Tibial artery (tissue), 4 donors: ENCODE measurements at regions of chr15 and their contacts with region 1.

Region 1: DNA sequence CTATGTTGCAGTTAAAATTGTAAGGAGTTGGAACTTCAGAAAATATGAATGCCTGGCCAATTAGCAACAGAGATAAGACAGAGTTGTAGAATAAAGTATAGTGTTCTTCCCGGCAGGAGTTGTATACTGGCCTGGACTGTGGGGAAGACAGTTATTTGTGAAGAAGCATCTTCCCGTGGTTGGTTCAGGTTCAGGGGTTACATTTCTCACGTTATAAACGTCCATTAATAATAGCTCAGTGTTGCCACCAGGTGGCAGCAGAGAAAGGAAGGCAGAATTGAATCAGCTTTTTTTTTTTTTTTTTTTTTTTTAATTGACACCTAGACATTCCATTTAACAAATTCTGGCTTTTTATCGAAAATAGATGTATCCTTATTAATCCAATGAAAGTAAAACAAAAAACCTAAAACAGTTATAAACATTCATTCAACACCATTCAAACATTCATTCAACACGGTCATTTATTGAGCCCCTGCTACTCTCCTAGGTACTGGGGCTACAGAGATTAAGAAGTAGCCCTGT is 66.4 kb upstream of the NR2E3 start:
- DNase-seq: peak in 1 of 2 donors; percentile 62
- H3K4me3 ChIP-seq: no peak overlapping the region
- H3K27ac ChIP-seq: no peak overlapping the region
- H3K4me1 ChIP-seq: peaks cover 0 to 3% (median 0%) of the 10 kb centered on the region in 4 donors
- H3K27me3 ChIP-seq: no peaks in the 10 kb centered on the region
- CTCF ChIP-seq: peak; percentile 57 to 63

Region 2: DNA sequence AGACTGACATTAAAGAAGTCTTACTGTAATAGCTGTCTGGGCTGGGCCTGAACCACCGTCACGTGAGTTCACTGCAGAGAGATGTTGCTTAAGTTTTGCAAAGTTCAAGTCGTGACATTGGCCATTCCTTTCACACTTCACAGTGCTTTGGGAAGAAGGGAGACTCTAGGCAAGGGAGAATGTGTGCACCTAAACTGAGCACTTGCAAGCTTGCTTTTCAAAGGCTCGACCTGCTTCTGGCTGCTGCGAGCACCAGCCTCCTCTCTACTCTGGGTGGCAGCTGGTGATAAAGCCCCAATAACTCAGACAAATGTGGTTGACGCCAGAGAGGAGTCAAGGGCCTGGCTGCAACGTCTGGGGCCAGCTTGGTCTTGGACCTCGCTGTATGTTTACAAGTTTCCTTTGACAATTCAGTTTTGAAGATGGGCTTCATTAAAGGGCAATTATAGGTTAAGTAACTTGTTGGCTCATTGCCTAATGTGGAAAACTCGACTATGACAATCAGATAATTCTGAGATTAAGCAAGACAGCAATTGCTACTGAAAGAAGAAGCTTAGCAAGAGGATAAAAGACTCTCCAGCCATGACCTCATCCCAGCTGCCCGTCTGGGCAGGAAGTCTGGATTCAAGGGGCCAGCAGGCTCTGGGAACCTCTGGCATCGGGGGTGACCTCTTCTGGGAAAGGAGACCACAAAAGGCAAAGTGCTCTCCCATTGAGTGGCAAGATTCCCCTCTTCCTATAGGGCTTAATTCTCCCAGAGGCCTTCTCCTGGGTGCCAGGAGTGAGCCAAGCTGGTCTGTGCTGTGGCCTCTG is 1404.0 kb before region 1 on chr15:
- intact Hi-C with region 1: no loop called
- DNase-seq: no peak
- H3K4me3 ChIP-seq: no peak overlapping the region
- H3K27ac ChIP-seq: no peak overlapping the region
- H3K4me1 ChIP-seq: no peaks in the 10 kb centered on the region
- H3K27me3 ChIP-seq: no peaks in the 10 kb centered on the region
- CTCF ChIP-seq: no peak

Region 3: GRCh38 chr15:71800835-71801745 is 57.2 kb after region 1 on chr15:
- intact Hi-C with region 1: loop called (anchors 5 kb)
- DNase-seq: no peak
- H3K4me3 ChIP-seq: no peak overlapping the region
- H3K27ac ChIP-seq: no peak overlapping the region
- H3K4me1 ChIP-seq: no peaks in the 10 kb centered on the region
- H3K27me3 ChIP-seq: no peaks in the 10 kb centered on the region
- CTCF ChIP-seq: peak; percentile 90 to 97

Region 4: DNA sequence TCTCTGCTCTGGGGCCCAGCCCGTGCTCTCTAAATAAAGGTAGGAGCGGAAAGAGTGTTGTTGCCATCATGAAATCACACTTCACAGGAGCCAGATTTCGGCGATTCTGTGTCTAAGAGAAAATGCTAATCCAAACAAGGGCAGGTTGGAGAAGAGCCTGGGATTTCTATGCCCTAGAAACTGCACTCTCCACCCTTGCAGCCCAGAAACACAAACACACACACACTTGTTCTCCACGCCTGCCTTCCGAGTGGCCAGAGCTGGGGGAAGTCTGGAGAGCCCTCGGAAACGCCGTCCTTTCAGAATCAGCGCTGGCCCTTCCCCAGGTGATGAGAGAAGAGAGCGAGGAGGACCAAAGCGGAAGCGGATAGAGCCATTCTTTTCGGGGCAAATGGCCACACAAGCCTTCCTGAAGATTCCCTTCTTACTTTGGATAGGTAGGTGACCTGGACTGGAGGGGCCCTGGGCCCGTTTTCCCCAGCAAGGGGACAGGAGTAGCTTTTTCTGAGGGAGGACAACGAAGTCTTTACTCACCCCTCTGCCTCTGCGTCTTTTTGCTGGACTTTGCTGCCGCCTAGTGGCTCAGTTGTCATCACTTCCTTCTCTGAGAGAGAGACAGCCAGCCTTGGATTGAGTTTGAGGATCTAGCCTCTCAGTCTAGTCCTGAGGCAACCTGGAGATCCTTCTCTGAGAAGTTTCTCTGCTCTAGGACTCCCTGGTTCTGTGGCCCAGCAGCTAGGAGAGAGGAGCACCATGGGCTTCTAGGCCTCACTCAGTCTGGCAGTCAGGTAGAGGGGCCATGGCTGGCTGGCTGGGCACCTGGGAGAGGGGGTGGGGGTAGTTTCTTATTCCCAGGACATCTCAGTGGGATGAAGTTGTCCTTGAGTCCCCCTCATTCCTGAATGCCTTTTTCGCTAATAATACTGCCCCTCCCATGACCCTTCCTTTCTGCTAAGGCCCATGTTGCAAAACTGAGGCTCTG is 412.0 kb after region 1 on chr15:
- intact Hi-C with region 1: loop called (anchors 10 kb)
- DNase-seq: peak; percentile 86 to 90
- H3K4me3 ChIP-seq: peak overlapping the region; percentile 49 to 54
- H3K27ac ChIP-seq: peak overlapping the region; percentile 49 to 63
- H3K4me1 ChIP-seq: peaks cover 0 to 12% (median 3%) of the 10 kb centered on the region in 4 donors
- H3K27me3 ChIP-seq: no peaks in the 10 kb centered on the region
- CTCF ChIP-seq: peak; percentile 77 to 86

Region 5: DNA sequence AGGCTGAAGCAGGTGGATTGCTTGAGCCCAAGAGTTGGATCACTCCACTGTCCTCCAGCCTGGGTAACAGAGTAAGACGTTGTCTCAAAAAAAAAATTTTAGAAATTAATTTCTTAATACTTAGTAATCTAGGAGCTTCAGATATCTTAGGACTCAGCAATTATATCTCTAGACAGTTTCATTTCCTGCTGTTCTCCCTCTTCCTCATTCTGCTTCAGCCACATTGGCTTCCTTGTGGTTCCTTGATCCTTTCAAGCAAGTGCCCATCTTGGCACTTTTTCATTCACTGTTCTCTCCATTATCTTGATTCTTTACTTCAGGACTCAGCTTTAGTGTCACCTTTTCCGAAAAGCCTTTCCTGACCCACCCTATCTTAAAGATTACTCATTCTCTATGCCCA is 676.7 kb after region 1 on chr15:
- intact Hi-C with region 1: no loop called
- DNase-seq: no peak
- H3K4me3 ChIP-seq: no peak overlapping the region
- H3K27ac ChIP-seq: no peak overlapping the region
- H3K4me1 ChIP-seq: no peaks in the 10 kb centered on the region
- H3K27me3 ChIP-seq: no peaks in the 10 kb centered on the region
- CTCF ChIP-seq: no peak